HEK293T (cell line): ENCODE measurements at regions of chr15 and their contacts with region 1.

Region 1: DNA sequence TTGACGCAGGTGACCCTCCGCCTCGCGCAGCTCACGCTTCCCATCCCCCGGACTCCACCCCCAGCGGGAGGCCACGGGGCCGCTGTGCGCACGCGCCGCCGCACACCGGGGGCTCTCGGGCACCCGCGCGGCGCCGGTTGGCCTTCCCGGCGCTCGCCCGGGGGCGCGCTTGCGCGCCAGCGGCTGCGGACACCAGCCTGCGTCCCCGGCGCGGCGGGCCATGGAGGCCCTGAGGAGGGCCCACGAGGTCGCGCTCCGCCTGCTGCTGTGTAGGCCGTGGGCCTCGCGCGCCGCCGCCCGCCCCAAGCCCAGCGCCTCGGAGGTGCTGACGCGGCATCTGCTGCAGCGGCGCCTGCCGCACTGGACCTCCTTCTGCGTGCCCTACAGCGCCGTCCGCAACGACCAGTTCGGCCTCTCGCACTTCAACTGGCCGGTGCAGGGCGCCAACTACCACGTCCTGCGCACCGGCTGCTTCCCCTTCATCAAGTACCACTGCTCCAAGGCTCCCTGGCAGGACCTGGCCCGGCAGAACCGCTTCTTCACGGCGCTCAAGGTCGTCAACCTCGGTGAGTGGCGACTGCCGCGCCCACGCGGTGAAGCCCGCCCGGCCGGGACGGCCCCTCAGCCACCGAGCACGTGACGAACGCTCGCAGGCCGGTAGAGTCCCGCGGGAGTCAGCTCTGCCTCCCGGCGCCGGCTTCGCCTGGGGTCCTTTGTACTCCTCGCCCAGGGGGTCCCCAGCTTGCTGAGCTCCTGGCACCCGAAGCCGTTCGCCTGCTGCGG is at the start of gene C15orf61:
- DNase-seq: peak; percentile 82

Region 2: DNA sequence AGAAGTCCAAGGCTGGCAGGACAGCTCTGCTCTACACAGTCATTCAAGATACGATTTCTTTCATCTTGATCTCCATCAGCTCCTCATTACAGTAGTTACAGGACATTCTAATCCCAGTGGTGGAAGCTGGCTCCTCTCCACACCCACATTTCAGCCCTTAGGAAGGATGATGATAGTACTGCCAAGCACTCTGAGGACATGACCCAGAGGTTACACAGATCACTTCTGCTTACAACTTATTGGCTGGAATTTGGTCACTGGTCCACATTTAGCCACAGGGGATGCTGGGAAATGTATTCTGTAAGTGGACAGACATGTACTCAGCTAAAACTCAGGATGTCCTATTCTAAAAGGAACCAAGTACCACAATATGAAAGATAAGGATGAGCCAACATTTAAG is 189.5 kb before region 1 on chr15:
- CTCF ChIA-PET with region 1: no interaction called
- POLR2A ChIA-PET with region 1: no interaction called
- DNase-seq: no peak

Region 3: DNA sequence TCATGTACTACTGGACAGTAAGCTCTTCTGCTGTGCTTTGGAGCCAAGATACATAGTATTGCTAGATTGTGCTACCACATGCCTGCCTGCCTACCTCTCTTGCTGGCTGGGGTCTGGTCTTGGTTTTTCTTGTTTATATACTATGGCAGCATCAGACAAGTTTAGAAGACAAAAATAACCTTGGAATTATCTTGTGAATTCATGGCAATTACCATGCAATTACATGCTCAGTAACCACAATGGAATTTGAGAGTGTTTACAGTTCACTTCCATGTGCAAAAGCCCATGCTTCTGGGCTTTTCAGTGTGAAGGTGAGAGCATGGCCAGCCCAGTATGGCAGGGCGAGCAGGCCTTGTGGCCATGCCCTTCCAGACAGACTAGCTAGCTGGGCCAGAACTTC is 48.3 kb before region 1 on chr15:
- CTCF ChIA-PET with region 1: no interaction called
- POLR2A ChIA-PET with region 1: no interaction called
- DNase-seq: no peak

Region 4: DNA sequence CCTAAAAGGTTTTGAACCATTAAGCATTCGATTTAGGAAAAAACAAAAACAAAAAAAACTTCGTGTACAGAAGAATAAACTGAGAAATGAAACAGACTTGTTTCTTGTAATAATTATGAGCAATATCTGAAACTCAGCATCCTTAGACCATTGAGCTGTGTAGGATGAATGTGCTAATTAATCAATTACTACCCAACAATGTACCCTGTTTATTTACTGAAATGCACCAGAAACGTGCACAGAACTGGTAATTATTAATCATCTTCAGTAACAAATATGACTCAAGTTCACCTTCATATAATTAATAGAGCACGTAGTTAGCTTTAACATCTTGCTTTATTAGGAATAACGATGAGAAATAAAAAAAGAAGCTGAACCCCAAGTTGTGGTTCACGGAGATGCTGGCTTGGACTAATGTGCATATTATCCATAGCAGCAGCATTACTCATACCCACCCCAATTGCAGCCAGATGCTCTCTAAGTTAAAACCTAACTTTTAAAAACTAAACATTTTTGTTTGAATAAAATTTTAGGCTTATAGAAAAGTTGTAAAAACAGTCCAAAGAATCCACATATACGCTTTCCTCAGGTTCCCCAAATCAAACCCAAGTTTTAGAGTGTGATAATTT is 10.5 kb before region 1 on chr15:
- CTCF ChIA-PET with region 1: no interaction called
- POLR2A ChIA-PET with region 1: interaction called, 14 read pairs
- DNase-seq: no peak

Region 5: DNA sequence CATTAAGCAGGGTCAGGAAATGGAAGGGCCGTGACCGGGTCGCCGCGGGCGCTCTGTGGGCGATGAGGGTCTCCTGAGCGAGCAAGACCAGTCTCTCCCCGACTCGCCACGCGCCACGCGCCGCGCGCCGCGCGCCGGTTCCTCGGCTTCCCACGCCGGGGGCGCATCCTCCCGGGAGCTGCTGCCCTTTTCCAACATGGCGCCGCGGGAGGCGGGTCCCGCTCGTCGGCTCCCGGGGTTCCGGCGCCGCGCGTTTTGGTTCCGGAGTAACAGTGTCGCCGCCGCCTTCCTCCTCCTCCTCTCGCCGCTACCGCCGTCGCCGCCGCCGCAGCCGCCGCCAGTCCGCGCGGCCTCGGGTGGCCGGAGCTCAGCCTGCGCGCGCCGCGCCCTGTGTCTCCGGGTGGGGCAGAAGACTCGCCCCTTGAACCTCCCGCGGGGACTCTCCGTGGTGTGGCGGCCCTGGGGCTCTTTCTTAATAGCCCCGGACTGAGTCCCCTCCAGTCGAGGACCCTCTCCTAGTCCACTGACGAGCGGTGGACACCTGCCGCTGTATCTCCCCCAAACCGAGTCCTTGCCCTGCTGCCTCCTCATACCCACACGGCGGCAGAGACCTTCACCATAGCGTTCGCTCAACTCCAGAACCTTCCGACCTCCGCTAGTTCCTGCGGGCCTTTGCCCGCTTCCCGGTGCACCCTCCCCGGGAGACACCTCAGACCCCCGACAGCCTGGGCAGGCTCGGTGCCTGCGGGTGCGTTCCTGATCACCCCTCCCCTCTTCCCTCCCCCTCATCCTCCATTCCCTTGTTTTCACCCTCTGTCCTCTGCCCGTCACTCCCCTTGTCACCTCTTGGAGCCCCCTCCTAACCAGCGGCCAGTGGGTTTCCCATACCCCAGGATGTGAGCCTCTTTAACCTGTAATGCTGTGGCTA is 21.5 kb after region 1 on chr15 and contains the start of gene MAP2K5:
- CTCF ChIA-PET with region 1: no interaction called
- POLR2A ChIA-PET with region 1: interaction called, 22 read pairs
- DNase-seq: peak; percentile 78

Region 6: GRCh38 chr15:67685008-67685599 is 163.9 kb after region 1 on chr15:
- CTCF ChIA-PET with region 1: no interaction called
- POLR2A ChIA-PET with region 1: no interaction called
- DNase-seq: no peak